HepG2 (cell line): ENCODE measurements at regions of chr10 and their contacts with region 1.

Region 1: GRCh38 chr10:73413528-73414229 is at the start of gene ANXA7:
- DNase-seq: peak; percentile 81
- ATAC-seq: peak; percentile 95
- H3K4me3 ChIP-seq: peak within 1 kb of the TSS; percentile 64 to 100 (median 89)
- H3K27ac ChIP-seq: peak within 1 kb of the TSS; percentile 99
- H3K4me1 ChIP-seq: peaks cover 65% of the 10 kb centered on the region
- H3K27me3 ChIP-seq: no peaks in the 10 kb centered on the region; a peak in 1 of 5 replicates
- CTCF ChIP-seq: peak; percentile 51
- EP300 ChIP-seq: no peak
- POLR2A ChIP-seq: peak; percentile 61 to 83
- RAD21 ChIP-seq: no peak
- total RNA-seq, gene ANXA7: 89.0 and 139 TPM in 2 replicates

Region 2: GRCh38 chr10:72729528-72729927 is 684.2 kb before region 1 on chr10:
- CTCF ChIA-PET with region 1: no interaction called
- POLR2A ChIA-PET with region 1: no interaction called
- in situ Hi-C with region 1: no loop called
- intact Hi-C with region 1: no loop called
- DNase-seq: peak; percentile 23
- ATAC-seq: peak; percentile 67
- H3K4me3 ChIP-seq: no peak overlapping the region
- H3K27ac ChIP-seq: no peak overlapping the region
- H3K4me1 ChIP-seq: peaks cover 11% of the 10 kb centered on the region; the same call in 1 of the 2 replicates
- H3K27me3 ChIP-seq: no peaks in the 10 kb centered on the region
- CTCF ChIP-seq: no peak
- EP300 ChIP-seq: no peak
- POLR2A ChIP-seq: no peak
- RAD21 ChIP-seq: no peak

Region 3: DNA sequence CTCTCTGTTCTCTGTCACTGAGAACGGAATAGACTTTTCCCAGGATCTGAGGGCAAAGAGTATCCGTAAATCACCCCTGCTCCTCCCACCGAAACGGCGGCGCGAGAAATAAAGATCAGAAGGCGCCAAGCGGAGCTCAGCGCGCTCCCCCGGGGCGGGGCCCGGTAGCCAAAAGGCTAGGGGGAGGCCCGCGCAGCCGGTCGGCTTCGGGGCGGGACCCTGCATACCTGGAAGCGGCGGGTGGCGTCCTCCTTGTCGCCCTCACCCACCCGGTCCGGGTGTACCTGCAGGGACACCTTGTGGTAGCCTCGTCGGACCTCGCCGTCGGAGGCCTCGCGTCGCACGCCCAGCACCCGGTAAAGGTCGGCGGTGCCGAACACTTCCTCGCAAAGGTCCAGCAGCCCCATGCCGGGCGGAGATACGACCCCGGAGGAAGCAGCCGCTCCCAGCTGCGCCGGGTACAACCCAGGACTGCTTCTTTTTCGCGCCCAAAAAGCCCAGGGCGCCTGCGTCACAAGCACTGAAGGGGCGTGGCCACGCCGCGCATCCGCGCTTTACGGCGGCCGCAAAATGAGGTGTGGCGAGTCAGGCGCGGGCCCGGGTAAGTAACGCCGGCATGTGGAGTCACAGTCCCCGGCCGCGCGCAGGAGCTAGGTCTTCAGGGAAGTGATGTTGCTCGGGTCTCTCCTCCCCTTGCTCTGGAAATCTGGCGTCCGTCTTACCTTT is 166.7 kb before region 1 on chr10 and contains the start of gene DNAJC9:
- CTCF ChIA-PET with region 1: no interaction called
- POLR2A ChIA-PET with region 1: interaction called, 10 read pairs
- in situ Hi-C with region 1: no loop called
- intact Hi-C with region 1: no loop called
- DNase-seq: peak; percentile 87
- ATAC-seq: peak; percentile 90
- H3K4me3 ChIP-seq: peak within 1 kb of the TSS; percentile 64 to 97 (median 79)
- H3K27ac ChIP-seq: peak within 1 kb of the TSS; percentile 94
- H3K4me1 ChIP-seq: peaks cover 50% of the 10 kb centered on the region
- H3K27me3 ChIP-seq: no peaks in the 10 kb centered on the region; a peak in 1 of 5 replicates
- CTCF ChIP-seq: peak; percentile 75
- EP300 ChIP-seq: 0 out of 4 replicates have a peak, but pooled peaks of 1 of the 2 experiments have one; percentile 3
- POLR2A ChIP-seq: peak; percentile 89 to 96
- RAD21 ChIP-seq: peak; percentile 59
- total RNA-seq, gene DNAJC9: 60.3 and 76.9 TPM in 2 replicates

Region 4: DNA sequence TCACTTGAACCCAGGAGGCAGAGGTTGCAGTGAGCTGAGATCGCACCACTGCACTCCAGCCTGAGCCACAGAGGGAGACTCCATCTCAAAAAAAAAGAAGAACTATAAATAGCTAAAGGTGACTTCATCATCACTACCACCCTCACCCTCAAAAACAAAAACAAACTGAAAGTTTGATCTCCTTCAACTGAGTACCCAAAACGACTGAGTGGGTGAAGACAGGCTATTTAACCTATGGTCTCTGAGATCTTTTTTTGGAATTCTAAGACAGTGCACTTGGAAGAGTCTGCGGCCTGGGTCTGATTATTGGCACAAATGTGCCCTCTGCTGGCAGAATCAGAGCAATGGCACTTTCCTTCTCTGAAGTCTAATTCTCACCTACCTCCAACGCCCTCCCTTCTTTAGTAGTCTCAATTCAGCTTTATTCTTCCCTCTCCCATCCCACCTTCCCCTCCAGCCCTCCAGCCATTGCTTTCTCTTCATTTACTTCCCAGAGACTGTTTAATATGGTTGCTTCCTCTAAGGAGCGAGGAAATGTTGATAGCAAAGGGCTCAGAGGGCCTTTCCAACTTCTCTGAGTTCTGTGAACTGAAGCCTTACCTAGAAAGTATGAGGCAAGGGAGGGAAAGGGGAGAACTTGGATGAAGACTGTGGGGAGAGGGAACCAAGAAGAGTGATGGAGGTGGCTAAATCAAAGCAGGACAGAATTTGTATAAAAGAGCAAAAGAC is 230.5 kb after region 1 on chr10:
- CTCF ChIA-PET with region 1: no interaction called
- POLR2A ChIA-PET with region 1: no interaction called
- in situ Hi-C with region 1: no loop called
- intact Hi-C with region 1: loop called (anchors 5 kb)
- DNase-seq: peak; percentile 50
- ATAC-seq: peak; percentile 56
- H3K4me3 ChIP-seq: no peak overlapping the region
- H3K27ac ChIP-seq: no peak overlapping the region
- H3K4me1 ChIP-seq: peaks cover 19% of the 10 kb centered on the region
- H3K27me3 ChIP-seq: peaks cover 1 to 19% of the 10 kb centered on the region in 2 experiments; a peak in 3 of 5 replicates
- CTCF ChIP-seq: peak; percentile 87
- EP300 ChIP-seq: no peak
- POLR2A ChIP-seq: no peak
- RAD21 ChIP-seq: peak; percentile 87